ENCODE measurements at regions of chr15 and their contacts with region 1.

Region 1: DNA sequence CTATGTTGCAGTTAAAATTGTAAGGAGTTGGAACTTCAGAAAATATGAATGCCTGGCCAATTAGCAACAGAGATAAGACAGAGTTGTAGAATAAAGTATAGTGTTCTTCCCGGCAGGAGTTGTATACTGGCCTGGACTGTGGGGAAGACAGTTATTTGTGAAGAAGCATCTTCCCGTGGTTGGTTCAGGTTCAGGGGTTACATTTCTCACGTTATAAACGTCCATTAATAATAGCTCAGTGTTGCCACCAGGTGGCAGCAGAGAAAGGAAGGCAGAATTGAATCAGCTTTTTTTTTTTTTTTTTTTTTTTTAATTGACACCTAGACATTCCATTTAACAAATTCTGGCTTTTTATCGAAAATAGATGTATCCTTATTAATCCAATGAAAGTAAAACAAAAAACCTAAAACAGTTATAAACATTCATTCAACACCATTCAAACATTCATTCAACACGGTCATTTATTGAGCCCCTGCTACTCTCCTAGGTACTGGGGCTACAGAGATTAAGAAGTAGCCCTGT is 66.4 kb upstream of the NR2E3 start:
- DNase-seq: peak; percentile 58 to 73
- H3K4me3 ChIP-seq: no peak overlapping the region
- H3K27ac ChIP-seq: no peak overlapping the region
- H3K4me1 ChIP-seq: no peaks in the 10 kb centered on the region
- H3K27me3 ChIP-seq: no peaks in the 10 kb centered on the region
- CTCF ChIP-seq: peak; percentile 34 to 82 (median 70)
- POLR2A ChIP-seq: no peak

Region 2: GRCh38 chr15:71691458-71692417 is 52.2 kb before region 1 on chr15:
- intact Hi-C with region 1: no loop called
- DNase-seq: peak; percentile 9 to 24
- H3K4me3 ChIP-seq: no peak overlapping the region
- H3K27ac ChIP-seq: peak overlapping the region in 2 of 3 donors; percentile 28 to 49
- H3K4me1 ChIP-seq: peaks cover 14 to 16% of the 10 kb centered on the region in 2 donors
- H3K27me3 ChIP-seq: no peaks in the 10 kb centered on the region
- CTCF ChIP-seq: no peak
- POLR2A ChIP-seq: no peak

Region 3: GRCh38 chr15:71800835-71801745 is 57.2 kb after region 1 on chr15:
- intact Hi-C with region 1: loop called (anchors 5 kb)
- DNase-seq: peak; percentile 54 to 63
- H3K4me3 ChIP-seq: no peak overlapping the region
- H3K27ac ChIP-seq: no peak overlapping the region
- H3K4me1 ChIP-seq: peaks cover 0 to 3% of the 10 kb centered on the region in 2 donors
- H3K27me3 ChIP-seq: no peaks in the 10 kb centered on the region
- CTCF ChIP-seq: peak; percentile 47 to 98 (median 90)
- POLR2A ChIP-seq: no peak

Region 4: GRCh38 chr15:72155635-72156616 is 412.0 kb after region 1 on chr15:
- intact Hi-C with region 1: loop called (anchors 5 kb)
- DNase-seq: peak; percentile 92 to 94
- H3K4me3 ChIP-seq: peak overlapping the region in 2 of 3 donors; percentile 8 to 33
- H3K27ac ChIP-seq: peak overlapping the region; percentile 89 to 92 (median 91)
- H3K4me1 ChIP-seq: peaks cover 38 to 46% of the 10 kb centered on the region in 2 donors
- H3K27me3 ChIP-seq: no peaks in the 10 kb centered on the region
- CTCF ChIP-seq: peak; percentile 39 to 99 (median 83)
- POLR2A ChIP-seq: peak in 1 of 2 donors; percentile 28

Measured in thyroid gland (tissue), 4 donors.